ENCODE measurements at regions of chr2 and their contacts with region 1.

Region 1: DNA sequence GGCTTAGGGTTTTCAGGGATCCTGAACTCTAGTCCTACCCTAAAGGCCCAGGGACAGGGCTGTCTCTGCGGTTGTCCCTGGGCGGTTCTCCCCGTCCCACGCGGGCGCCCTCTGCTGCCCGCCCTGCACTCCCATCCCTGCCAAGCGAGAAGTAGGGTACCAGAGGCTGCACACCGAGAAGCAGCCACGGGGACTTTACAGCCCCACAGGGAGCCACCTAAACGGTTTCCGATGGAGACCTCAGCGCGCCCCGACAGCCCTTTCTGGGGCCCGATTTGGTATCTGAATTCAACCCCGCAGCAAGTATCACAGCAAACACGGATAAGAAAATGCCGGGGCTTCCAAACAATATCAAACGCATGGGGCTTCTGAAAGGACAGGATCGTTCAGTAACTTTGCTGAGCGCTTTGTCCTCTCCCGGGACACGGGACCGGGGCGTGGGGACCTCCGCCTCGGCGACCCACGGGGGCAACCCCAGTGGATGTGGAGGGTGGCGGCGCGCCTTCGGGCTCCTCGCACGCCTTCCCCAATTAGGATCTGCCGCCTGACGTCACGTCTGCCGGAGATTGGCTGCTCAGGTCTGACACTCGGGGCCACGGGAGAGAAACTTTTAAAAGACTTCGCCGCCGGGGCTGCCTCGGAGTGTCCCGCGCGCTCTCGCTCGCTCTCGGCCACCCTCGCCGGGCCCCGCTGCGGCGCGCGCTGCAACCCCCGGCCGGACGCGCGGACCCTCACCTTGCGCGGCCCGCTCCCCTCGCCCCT is at the start of gene LTBP1:
- DNase-seq: peak; percentile 87
- ATAC-seq: peak; percentile 90
- total RNA-seq, gene LTBP1: 79.9 TPM

Region 2: GRCh38 chr2:32783469-32783868 is 163.0 kb before region 1 on chr2:
- intact Hi-C with region 1: loop called (anchors 5 kb)
- DNase-seq: no peak
- ATAC-seq: peak; percentile 92

Region 3: GRCh38 chr2:32798829-32799228 is 147.7 kb before region 1 on chr2:
- intact Hi-C with region 1: no loop called
- DNase-seq: no peak
- ATAC-seq: no peak

Region 4: GRCh38 chr2:33033606-33034081 is 87.1 kb after region 1 on chr2:
- intact Hi-C with region 1: loop called (anchors 5 kb)
- DNase-seq: no peak
- ATAC-seq: peak; percentile 81

Region 5: GRCh38 chr2:33059471-33060156 is 113.1 kb after region 1 on chr2:
- intact Hi-C with region 1: no loop called
- DNase-seq: no peak
- ATAC-seq: peak; percentile 88